ENCODE measurements at regions of chr4 and their contacts with region 1.

Region 1: DNA sequence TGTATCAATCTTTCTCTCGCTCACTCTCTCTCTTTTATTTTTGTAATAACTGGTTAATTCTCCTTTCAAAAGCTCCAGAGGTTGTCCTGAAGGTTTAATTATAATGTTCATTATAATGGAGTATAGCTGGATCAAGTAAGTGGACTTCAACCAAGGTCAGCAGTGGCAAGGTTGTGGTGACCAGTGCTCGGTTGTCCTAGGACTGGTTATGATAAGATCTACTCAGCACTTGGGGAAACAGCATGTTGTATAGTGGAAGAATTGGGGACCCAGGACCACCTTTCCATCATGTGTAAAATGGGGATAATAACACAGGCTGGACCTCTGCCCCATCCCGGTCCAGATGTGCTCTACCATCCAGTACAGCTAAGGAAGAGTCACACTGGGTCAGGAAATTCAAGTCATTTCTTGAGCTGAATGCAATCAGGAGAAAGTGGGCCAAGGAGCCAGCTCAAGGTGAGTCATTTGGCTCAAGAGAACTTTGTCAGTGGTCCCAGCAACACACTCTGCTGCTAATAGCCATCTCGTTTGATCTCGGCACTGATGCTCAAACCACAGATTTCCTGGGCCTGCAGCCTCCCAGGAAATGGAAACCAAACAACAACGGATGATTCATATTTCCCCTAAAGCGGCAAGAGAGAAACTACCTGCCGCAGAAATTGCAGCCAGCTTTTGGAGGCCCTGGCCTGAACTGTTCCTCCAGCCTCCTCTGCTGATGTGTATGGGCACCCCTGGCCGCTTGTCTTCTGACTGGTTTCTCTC is 123.6 kb upstream of the RBPJ start:
- DNase-seq: peak; percentile 83
- H3K4me3 Mint-ChIP-seq: peak overlapping the region; percentile 62
- H3K27ac Mint-ChIP-seq: peak overlapping the region; percentile 91
- H3K4me1 Mint-ChIP-seq: peaks cover 70% of the 10 kb centered on the region
- H3K27me3 Mint-ChIP-seq: no peaks in the 10 kb centered on the region

Region 2: DNA sequence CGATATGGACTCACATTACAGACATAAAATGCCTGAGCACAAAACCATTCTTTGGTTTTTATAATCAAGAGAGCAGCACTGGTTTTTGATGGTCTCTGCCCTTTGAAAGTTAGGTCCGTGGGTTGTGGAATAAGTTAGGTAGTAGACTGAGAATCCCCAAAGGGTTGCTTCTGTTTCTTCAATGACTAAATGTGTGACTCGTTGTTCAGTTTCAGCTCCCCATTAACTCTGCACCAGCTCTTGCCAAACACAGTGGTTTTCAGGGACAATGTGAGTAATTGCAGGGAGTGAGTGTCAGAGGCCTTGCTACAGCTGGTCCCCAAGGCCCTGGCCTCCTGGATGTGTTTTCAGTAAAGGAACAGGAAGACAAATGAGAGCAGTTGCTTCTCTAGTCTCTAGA is 258.4 kb before region 1 on chr4:
- intact Hi-C with region 1: loop called (anchors 5 kb)
- DNase-seq: peak; percentile 21
- H3K4me3 Mint-ChIP-seq: peak overlapping the region; percentile 59
- H3K27ac Mint-ChIP-seq: peak overlapping the region; percentile 96
- H3K4me1 Mint-ChIP-seq: peaks cover 34% of the 10 kb centered on the region
- H3K27me3 Mint-ChIP-seq: no peaks in the 10 kb centered on the region

Region 3: GRCh38 chr4:26081795-26082498 is 115.3 kb before region 1 on chr4:
- intact Hi-C with region 1: loop called (anchors 1 kb)
- DNase-seq: no peak
- H3K4me3 Mint-ChIP-seq: no peak overlapping the region
- H3K27ac Mint-ChIP-seq: peak overlapping the region; percentile 93
- H3K4me1 Mint-ChIP-seq: peaks cover 79% of the 10 kb centered on the region
- H3K27me3 Mint-ChIP-seq: no peaks in the 10 kb centered on the region

Region 4: GRCh38 chr4:26141911-26142638 is 55.1 kb before region 1 on chr4:
- intact Hi-C with region 1: loop called (anchors 1 kb)
- DNase-seq: no peak
- H3K4me3 Mint-ChIP-seq: peak overlapping the region; percentile 22
- H3K27ac Mint-ChIP-seq: peak overlapping the region; percentile 89
- H3K4me1 Mint-ChIP-seq: peaks cover 73% of the 10 kb centered on the region
- H3K27me3 Mint-ChIP-seq: no peaks in the 10 kb centered on the region

Region 5: DNA sequence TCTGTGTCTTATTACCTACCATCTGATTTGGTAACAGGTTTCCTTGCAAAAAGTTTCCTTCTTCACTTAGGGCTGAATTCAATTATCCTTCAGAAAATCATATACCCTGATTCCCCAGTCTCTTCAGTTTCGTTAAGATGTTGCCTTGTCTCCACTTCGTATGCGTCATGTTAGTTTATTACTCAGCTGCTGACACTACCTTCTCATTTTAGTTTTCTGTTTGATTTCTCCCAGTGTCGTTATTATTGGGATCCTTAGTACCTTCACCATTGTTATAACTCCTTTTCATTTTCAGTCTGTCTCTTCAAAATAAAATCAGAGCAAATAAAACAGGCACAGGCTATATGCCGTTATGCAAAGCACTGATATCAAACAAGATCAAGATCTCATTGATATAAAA is 36.2 kb after region 1 on chr4:
- intact Hi-C with region 1: loop called (anchors 5 kb)
- DNase-seq: no peak
- H3K4me3 Mint-ChIP-seq: no peak overlapping the region
- H3K27ac Mint-ChIP-seq: no peak overlapping the region
- H3K4me1 Mint-ChIP-seq: peaks cover 17% of the 10 kb centered on the region
- H3K27me3 Mint-ChIP-seq: no peaks in the 10 kb centered on the region

Region 6: GRCh38 chr4:26860157-26860921 is 663.1 kb after region 1 on chr4 and contains the start of gene STIM2:
- intact Hi-C with region 1: loop called (anchors 10 kb)
- DNase-seq: peak; percentile 99
- H3K4me3 Mint-ChIP-seq: peak within 1 kb of the TSS; percentile 93
- H3K27ac Mint-ChIP-seq: peak within 1 kb of the TSS; percentile 95
- H3K4me1 Mint-ChIP-seq: peaks cover 52% of the 10 kb centered on the region
- H3K27me3 Mint-ChIP-seq: peaks cover 4% of the 10 kb centered on the region
- total RNA-seq, gene STIM2: 35.5 and 37.1 TPM in 2 replicates